HCT116 (cell line): ENCODE measurements at regions of chr12 and their contacts with region 1.

Region 1: GRCh38 chr12:103548622-103549601 is 38.2 kb upstream of the STAB2 start:
- DNase-seq: peak; percentile 73
- ATAC-seq: peak; percentile 99
- H3K4me3 ChIP-seq: no peak overlapping the region
- H3K27ac ChIP-seq: no peak overlapping the region
- H3K4me1 ChIP-seq: no peaks in the 10 kb centered on the region
- H3K27me3 ChIP-seq: no peaks in the 10 kb centered on the region
- CTCF ChIP-seq: peak; percentile 76 to 94 (median 85)
- POLR2A ChIP-seq: no peak
- RAD21 ChIP-seq: peak; percentile 94

Region 2: GRCh38 chr12:102182635-102183034 is 1366.3 kb before region 1 on chr12:
- CTCF ChIA-PET with region 1: no interaction called
- POLR2A ChIA-PET with region 1: no interaction called
- RAD21 ChIA-PET with region 1: no interaction called
- intact Hi-C with region 1: no loop called
- DNase-seq: no peak
- ATAC-seq: no peak
- H3K4me3 ChIP-seq: no peak overlapping the region
- H3K27ac ChIP-seq: no peak overlapping the region
- H3K4me1 ChIP-seq: no peaks in the 10 kb centered on the region
- H3K27me3 ChIP-seq: no peaks in the 10 kb centered on the region
- CTCF ChIP-seq: no peak
- POLR2A ChIP-seq: no peak
- RAD21 ChIP-seq: no peak

Region 3: DNA sequence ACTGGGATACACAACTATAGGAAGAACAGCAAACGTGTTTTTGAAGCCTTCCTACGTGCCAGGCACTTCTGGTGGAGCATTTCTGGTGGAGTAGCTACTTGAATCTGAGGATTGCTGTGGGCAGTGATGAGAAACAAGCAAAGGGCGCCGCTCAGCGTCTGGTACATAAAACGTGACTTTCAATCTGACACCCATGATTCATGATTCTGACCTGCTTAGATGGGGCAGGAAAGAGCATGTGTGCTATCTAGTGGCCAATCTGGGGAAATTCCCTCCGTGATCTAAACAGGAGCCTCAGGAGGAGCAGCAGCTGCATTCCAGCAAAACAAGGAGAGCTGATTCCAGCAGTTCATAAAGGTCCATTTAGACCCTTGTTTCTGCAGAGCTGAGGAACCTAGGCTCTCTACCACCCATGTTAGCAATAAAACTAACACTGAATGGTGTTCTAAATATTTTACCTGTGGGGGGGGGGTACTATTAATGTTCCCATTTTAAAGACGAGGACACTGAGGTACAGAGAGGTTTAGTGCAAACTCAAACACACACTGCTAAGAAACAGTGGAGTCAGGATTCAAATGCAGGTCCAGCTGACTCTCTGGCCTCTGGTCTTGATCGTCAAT is 669.7 kb before region 1 on chr12:
- CTCF ChIA-PET with region 1: interaction called, 22 read pairs
- POLR2A ChIA-PET with region 1: no interaction called
- RAD21 ChIA-PET with region 1: no interaction called
- intact Hi-C with region 1: loop called (anchors 1 kb)
- DNase-seq: peak; percentile 76
- ATAC-seq: peak; percentile 88
- H3K4me3 ChIP-seq: no peak overlapping the region
- H3K27ac ChIP-seq: no peak overlapping the region
- H3K4me1 ChIP-seq: 0 out of 4 replicates have a peak, but pooled peaks cover 0 to 3% of the 10 kb centered on the region in 2 experiments
- H3K27me3 ChIP-seq: peaks cover 13% of the 10 kb centered on the region; the same call in 1 of the 2 replicates
- CTCF ChIP-seq: peak; percentile 54 to 95 (median 62)
- POLR2A ChIP-seq: no peak
- RAD21 ChIP-seq: peak; percentile 85

Region 4: DNA sequence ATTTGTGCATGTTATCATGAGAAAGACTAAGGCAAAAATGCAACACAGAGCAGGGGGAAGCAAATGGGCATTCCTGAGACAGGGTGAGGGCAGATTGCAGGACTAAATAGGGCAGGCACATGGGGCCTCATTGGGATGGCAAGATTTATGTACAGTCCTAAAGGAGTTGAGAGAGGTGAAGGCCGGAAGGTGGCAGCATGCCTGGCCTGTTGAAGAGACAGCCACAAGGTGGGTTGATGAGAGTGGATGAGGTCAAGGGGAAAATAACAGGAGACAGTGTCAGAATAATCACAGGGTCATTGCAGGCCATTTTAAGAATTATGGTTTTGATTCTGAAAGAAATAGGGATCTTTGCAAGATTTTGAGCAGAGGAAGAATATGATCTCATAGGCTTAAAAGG is 652.8 kb before region 1 on chr12:
- CTCF ChIA-PET with region 1: no interaction called
- POLR2A ChIA-PET with region 1: no interaction called
- RAD21 ChIA-PET with region 1: no interaction called
- intact Hi-C with region 1: loop called (anchors 5 kb)
- DNase-seq: no peak
- ATAC-seq: peak; percentile 78
- H3K4me3 ChIP-seq: no peak overlapping the region
- H3K27ac ChIP-seq: no peak overlapping the region
- H3K4me1 ChIP-seq: no peaks in the 10 kb centered on the region
- H3K27me3 ChIP-seq: 0 out of 2 replicates have a peak, but pooled peaks cover 8% of the 10 kb centered on the region
- CTCF ChIP-seq: peak; percentile 26 to 27 (median 27); a peak in 2 of 6 replicates
- POLR2A ChIP-seq: no peak
- RAD21 ChIP-seq: no peak

Region 5: GRCh38 chr12:102948941-102949352 is 600.0 kb before region 1 on chr12:
- CTCF ChIA-PET with region 1: interaction called, 19 read pairs
- POLR2A ChIA-PET with region 1: no interaction called
- RAD21 ChIA-PET with region 1: interaction called in 1 of 2 experiments, 4 read pairs
- intact Hi-C with region 1: loop called (anchors 1 kb)
- DNase-seq: peak; percentile 23
- ATAC-seq: peak; percentile 59; the same call in 1 of the 2 replicates
- H3K4me3 ChIP-seq: no peak overlapping the region
- H3K27ac ChIP-seq: no peak overlapping the region
- H3K4me1 ChIP-seq: no peaks in the 10 kb centered on the region
- H3K27me3 ChIP-seq: peaks cover 26% of the 10 kb centered on the region
- CTCF ChIP-seq: peak; percentile 63 to 95 (median 84)
- POLR2A ChIP-seq: no peak
- RAD21 ChIP-seq: peak; percentile 77

Region 6: DNA sequence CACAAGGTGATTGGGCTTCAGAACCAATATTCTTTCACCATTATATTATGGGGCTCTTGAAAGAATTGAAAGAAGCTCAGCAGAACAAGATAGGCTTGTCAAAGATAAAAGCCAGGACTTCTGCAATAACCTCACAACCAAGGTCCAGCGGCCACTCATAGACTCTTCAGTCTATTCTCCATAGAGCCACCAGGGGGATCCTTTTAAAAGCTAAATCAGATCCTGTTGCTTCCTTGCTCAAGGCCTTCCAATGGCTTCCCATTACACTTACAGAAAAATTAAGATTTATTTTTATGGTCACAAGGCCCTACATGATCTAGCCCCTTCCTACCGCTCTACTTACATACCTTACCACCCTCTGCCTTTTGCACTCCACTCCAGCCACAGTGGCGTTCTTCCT is 222.7 kb before region 1 on chr12:
- CTCF ChIA-PET with region 1: no interaction called
- POLR2A ChIA-PET with region 1: no interaction called
- RAD21 ChIA-PET with region 1: no interaction called
- intact Hi-C with region 1: loop called (anchors 2 kb)
- DNase-seq: peak; percentile 18
- ATAC-seq: peak; percentile 83
- H3K4me3 ChIP-seq: no peak overlapping the region
- H3K27ac ChIP-seq: no peak overlapping the region
- H3K4me1 ChIP-seq: no peaks in the 10 kb centered on the region
- H3K27me3 ChIP-seq: peaks cover 7% of the 10 kb centered on the region; the same call in 1 of the 2 replicates
- CTCF ChIP-seq: peak; percentile 17 to 53 (median 53); a peak in 5 of 6 replicates
- POLR2A ChIP-seq: no peak
- RAD21 ChIP-seq: peak; percentile 47

Region 7: DNA sequence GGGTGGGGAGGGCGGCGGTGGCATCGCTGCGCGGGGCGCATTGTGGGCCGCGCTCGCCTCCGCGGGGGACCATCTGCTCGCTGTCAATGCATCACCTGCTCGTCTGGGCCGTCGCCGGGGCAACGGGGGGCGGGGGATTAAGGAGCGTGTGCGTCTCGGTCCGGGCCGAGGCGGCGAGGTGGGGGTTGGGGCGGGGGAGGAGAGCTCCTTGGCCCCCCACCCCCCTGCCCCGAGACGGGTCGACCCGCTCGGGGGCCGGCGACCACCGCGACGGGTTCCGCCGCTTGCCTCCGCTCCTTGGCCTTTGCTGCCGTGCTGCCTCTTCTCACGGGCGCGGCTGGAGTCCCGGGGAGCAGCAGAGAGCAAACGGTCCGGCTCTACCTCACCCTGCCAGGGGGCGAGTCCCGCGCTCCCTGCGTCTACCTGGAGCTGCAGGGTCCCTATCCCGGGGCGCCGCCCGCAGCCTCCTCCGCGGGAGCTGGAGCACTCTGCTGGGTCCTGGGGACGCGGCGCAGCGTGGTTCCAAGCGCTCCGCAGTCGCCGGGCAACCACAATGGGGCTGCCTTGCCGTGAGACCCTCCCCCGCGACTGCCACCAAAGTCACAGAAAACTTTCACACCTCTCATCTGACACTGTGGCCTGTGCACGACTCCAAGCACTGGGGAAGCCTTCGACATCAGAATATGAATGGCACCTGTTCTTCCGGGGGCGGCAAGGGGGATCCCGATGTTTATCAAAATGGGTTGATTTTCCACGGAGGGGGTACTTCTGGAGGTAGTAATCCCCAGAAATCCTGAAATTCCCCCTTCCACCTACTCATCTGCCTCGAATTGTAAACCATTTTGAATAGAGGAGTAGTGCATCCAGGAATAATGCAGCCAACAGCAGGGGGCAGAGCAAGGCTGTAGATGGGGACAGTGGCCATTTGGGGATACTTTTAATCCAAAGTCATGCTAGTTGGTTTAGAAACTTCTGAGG is 53.1 kb before region 1 on chr12 and contains the start of gene C12orf42:
- CTCF ChIA-PET with region 1: interaction called, 5 read pairs
- POLR2A ChIA-PET with region 1: no interaction called
- RAD21 ChIA-PET with region 1: no interaction called
- intact Hi-C with region 1: loop called (anchors 2 kb)
- DNase-seq: peak; percentile 12
- ATAC-seq: peak; percentile 76
- H3K4me3 ChIP-seq: no peak within 1 kb of the TSS
- H3K27ac ChIP-seq: no peak within 1 kb of the TSS
- H3K4me1 ChIP-seq: no peaks in the 10 kb centered on the region
- H3K27me3 ChIP-seq: 0 out of 2 replicates have a peak, but pooled peaks cover 4% of the 10 kb centered on the region
- CTCF ChIP-seq: peak; percentile 56 to 63 (median 57); a peak in 5 of 6 replicates
- POLR2A ChIP-seq: no peak
- RAD21 ChIP-seq: peak; percentile 60
- total RNA-seq, gene C12orf42: not detected

Region 8: GRCh38 chr12:104276273-104277131 is 727.6 kb after region 1 on chr12:
- CTCF ChIA-PET with region 1: no interaction called
- POLR2A ChIA-PET with region 1: no interaction called
- RAD21 ChIA-PET with region 1: no interaction called
- intact Hi-C with region 1: no loop called
- DNase-seq: no peak
- ATAC-seq: no peak
- H3K4me3 ChIP-seq: peak overlapping the region in 1 of 2 experiments; percentile 24; a peak in 2 of 4 replicates
- H3K27ac ChIP-seq: peak overlapping the region; percentile 83
- H3K4me1 ChIP-seq: peaks cover 57 to 82% of the 10 kb centered on the region in 2 experiments
- H3K27me3 ChIP-seq: no peaks in the 10 kb centered on the region
- CTCF ChIP-seq: no peak
- POLR2A ChIP-seq: no peak
- RAD21 ChIP-seq: no peak